Pancreas (tissue), 10 donors: ENCODE measurements at regions of chr11 and their contacts with region 1.

Region 1: GRCh38 chr11:11265994-11266606 is 87.0 kb downstream of the CSNK2A3 start:
- DNase-seq: peak in 5 of 6 donors; percentile 19 to 84 (median 59)
- ATAC-seq: peak in 3 of 4 donors; percentile 80 to 88 (median 86)
- H3K4me3 ChIP-seq: no peak overlapping the region
- H3K27ac ChIP-seq: no peak overlapping the region
- H3K4me1 ChIP-seq: no peaks in the 10 kb centered on the region
- H3K27me3 ChIP-seq: no peaks in the 10 kb centered on the region
- CTCF ChIP-seq: peak; percentile 57 to 69 (median 68)

Region 2: GRCh38 chr11:11044137-11044855 is 221.8 kb before region 1 on chr11:
- intact Hi-C with region 1: loop called in 1 of 3 experiments (anchors 10 kb)
- DNase-seq: no peak
- ATAC-seq: no peak
- H3K4me3 ChIP-seq: no peak overlapping the region
- H3K27ac ChIP-seq: no peak overlapping the region
- H3K4me1 ChIP-seq: no peaks in the 10 kb centered on the region
- H3K27me3 ChIP-seq: no peaks in the 10 kb centered on the region
- CTCF ChIP-seq: no peak